Panc1 (cell line): ENCODE measurements at regions of chr6 and their contacts with region 1.

Region 1: DNA sequence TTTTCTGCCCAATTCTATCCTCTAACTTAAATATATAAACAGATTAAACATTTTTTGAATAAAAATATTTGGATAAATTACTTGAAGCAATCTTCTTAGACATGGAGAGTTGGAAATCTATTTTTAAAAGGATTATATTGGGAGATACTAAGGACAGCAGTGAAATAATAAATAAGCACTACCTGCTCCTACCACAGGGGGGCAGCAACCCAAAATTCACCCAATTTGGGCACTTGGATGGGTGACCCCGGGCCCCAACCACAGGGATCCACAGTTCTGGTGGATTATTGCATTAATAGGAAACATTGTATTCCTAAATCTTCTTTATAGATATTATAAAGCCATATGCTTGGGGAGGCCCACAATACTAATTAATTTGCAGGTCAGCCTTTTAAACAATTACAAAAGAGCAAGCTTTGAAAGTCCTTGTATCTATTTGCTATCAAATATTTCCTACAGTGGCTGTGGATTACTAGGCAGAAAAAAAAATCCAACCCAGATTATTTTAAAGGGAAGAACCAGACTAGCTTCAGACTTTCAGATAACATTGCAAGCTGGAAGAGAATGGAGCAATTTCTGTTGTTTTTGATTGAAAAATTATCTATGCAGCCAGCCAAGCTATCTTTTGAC is 66.4 kb upstream of the PDE10A start:
- DNase-seq: peak; percentile 7
- ATAC-seq: peak; percentile 71; the same call in 1 of the 2 replicates
- H3K4me3 ChIP-seq: no peak overlapping the region
- H3K27ac ChIP-seq: no peak overlapping the region
- H3K4me1 ChIP-seq: no peaks in the 10 kb centered on the region
- H3K27me3 ChIP-seq: no peaks in the 10 kb centered on the region
- CTCF ChIP-seq: peak; percentile 94

Region 2: GRCh38 chr6:165636402-165637048 is 92.9 kb before region 1 on chr6:
- CTCF ChIA-PET with region 1: no interaction called
- POLR2A ChIA-PET with region 1: no interaction called
- in situ Hi-C with region 1: no loop called
- intact Hi-C with region 1: no loop called
- DNase-seq: no peak
- ATAC-seq: 0 out of 2 replicates have a peak, but pooled peaks have one; percentile 13
- H3K4me3 ChIP-seq: no peak overlapping the region
- H3K27ac ChIP-seq: peak overlapping the region; percentile 59; the same call in 1 of the 2 replicates
- H3K4me1 ChIP-seq: peaks cover 62% of the 10 kb centered on the region
- H3K27me3 ChIP-seq: no peaks in the 10 kb centered on the region
- CTCF ChIP-seq: no peak

Region 3: GRCh38 chr6:166106076-166106686 is 376.8 kb after region 1 on chr6:
- CTCF ChIA-PET with region 1: no interaction called
- POLR2A ChIA-PET with region 1: no interaction called
- in situ Hi-C with region 1: no loop called
- intact Hi-C with region 1: loop called (anchors 10 kb)
- DNase-seq: peak; percentile 42
- ATAC-seq: peak; percentile 92
- H3K4me3 ChIP-seq: no peak overlapping the region
- H3K27ac ChIP-seq: no peak overlapping the region
- H3K4me1 ChIP-seq: no peaks in the 10 kb centered on the region
- H3K27me3 ChIP-seq: peaks cover 8% of the 10 kb centered on the region
- CTCF ChIP-seq: peak; percentile 90